Mucosa of descending colon (tissue), 3 donors: ENCODE measurements at regions of chr11 and their contacts with region 1.

Region 1: GRCh38 chr11:61129639-61130523 is 27.6 kb downstream of the CD5 start:
- DNase-seq: peak; percentile 90 to 94 (median 94)
- ATAC-seq: peak; percentile 97
- H3K4me3 ChIP-seq: no peak overlapping the region
- H3K4me1 ChIP-seq: peaks cover 11% of the 10 kb centered on the region
- CTCF ChIP-seq: peak; percentile 99

Region 2: DNA sequence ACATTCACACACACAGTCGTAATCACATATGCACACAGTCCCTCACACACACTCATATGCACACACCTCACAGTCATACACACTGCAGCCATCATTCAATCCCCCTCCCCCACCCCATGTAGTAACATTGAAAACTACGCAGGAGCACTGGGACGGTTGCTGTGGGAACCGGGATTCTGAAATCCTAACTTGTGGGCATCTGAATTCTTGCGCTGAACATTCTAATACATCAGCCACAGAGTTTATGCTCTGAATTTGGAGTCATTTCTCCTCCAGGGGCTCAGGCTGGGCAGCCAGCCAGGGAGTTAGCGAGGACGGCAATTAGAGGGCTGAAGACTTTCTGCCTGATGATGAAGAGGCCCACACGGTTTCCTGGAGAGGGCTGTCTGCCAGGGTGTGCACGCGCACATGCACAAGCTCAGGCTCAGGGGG is 125.7 kb before region 1 on chr11:
- intact Hi-C with region 1: no loop called
- DNase-seq: no peak
- ATAC-seq: peak; percentile 35
- H3K4me3 ChIP-seq: no peak overlapping the region
- H3K4me1 ChIP-seq: peaks cover 14% of the 10 kb centered on the region
- CTCF ChIP-seq: no peak

Region 3: GRCh38 chr11:61187505-61188130 is 57.7 kb after region 1 on chr11:
- intact Hi-C with region 1: loop called in 1 of 2 experiments (anchors 10 kb)
- DNase-seq: peak in 2 of 3 donors; percentile 65 to 92
- ATAC-seq: peak; percentile 82
- H3K4me3 ChIP-seq: no peak overlapping the region
- H3K4me1 ChIP-seq: no peaks in the 10 kb centered on the region
- CTCF ChIP-seq: peak; percentile 88